Natural killer cell (primary cell): ENCODE measurements at regions of chr11 and their contacts with region 1.

Region 1: DNA sequence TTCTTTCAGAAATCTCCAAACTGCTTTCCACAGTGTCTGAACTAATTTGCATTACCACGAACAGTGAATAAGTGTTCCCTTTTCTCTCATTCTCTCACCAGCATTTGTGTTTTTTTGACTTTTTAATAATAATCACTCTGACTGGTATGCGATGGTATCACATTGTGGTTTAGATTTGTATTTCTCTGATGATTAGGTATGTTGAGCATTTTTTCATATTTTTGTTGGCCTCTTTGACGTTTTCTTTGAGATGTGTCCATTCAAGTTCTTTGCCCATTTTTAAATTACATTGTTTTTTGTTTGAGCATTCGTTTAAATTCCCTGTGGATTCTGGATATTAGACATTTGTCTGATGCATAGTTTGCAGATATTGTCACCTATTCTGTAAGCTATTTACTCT is 1639.6 kb upstream of the TENM4 start:
- DNase-seq: no peak
- ATAC-seq: no peak
- H3K4me3 ChIP-seq: no peak overlapping the region
- H3K4me3 Mint-ChIP-seq: no peak overlapping the region
- H3K27ac ChIP-seq: no peak overlapping the region
- H3K27ac Mint-ChIP-seq: no peak overlapping the region
- H3K4me1 ChIP-seq: no peaks in the 10 kb centered on the region
- H3K4me1 Mint-ChIP-seq: no peaks in the 10 kb centered on the region
- H3K27me3 ChIP-seq: no peaks in the 10 kb centered on the region
- H3K27me3 Mint-ChIP-seq: no peaks in the 10 kb centered on the region
- CTCF ChIP-seq: no peak

Region 2: GRCh38 chr11:80925321-80925720 is 155.2 kb before region 1 on chr11:
- intact Hi-C with region 1: no loop called
- DNase-seq: no peak
- ATAC-seq: no peak
- H3K4me3 ChIP-seq: no peak overlapping the region
- H3K4me3 Mint-ChIP-seq: no peak overlapping the region
- H3K27ac ChIP-seq: no peak overlapping the region
- H3K27ac Mint-ChIP-seq: no peak overlapping the region
- H3K4me1 ChIP-seq: no peaks in the 10 kb centered on the region
- H3K4me1 Mint-ChIP-seq: no peaks in the 10 kb centered on the region
- H3K27me3 ChIP-seq: no peaks in the 10 kb centered on the region
- H3K27me3 Mint-ChIP-seq: no peaks in the 10 kb centered on the region
- CTCF ChIP-seq: no peak

Region 3: DNA sequence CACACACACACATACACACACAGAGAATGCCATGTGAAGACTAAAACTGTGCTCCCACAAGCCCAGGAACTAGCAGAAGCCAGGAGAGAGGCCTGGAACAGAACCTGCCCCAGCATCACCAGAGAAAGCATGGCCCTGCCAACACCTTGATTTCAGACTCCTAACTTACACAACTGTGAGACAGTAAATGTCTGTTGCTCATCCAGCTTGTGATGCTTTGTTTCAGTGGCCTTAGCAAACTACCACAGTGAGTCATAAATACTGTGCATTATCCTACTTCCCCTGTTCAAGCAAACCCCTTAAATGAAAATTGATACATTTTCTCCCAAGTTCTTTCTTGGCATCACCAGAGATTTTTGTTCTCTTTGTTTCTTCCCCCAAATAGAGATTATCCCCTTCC is 100.3 kb before region 1 on chr11:
- intact Hi-C with region 1: no loop called
- DNase-seq: no peak
- ATAC-seq: no peak
- H3K4me3 ChIP-seq: no peak overlapping the region
- H3K4me3 Mint-ChIP-seq: no peak overlapping the region
- H3K27ac ChIP-seq: no peak overlapping the region
- H3K27ac Mint-ChIP-seq: no peak overlapping the region
- H3K4me1 ChIP-seq: no peaks in the 10 kb centered on the region
- H3K4me1 Mint-ChIP-seq: no peaks in the 10 kb centered on the region
- H3K27me3 ChIP-seq: no peaks in the 10 kb centered on the region
- H3K27me3 Mint-ChIP-seq: no peaks in the 10 kb centered on the region
- CTCF ChIP-seq: no peak

Region 4: DNA sequence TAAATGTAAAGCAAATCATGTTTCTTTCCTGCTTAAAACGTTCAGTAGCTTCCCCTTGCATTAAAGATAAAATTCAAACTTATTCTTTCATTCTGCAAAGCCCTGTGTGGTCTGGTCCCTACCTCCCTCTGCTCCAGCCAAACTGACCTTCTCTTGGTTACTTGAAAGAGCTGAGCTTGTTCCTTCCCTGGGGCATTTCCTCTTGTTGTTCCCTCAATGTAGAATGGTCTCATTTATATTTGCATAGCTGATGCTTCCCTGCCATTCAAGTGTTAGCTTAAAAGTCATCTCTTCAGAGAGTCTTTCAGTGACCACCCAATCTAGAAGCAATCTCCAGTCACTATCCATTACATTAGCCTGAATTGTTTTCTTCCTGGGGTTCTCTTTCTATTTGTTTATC is 21.1 kb before region 1 on chr11:
- intact Hi-C with region 1: loop called (anchors 1 kb)
- DNase-seq: no peak
- ATAC-seq: no peak
- H3K4me3 ChIP-seq: no peak overlapping the region
- H3K4me3 Mint-ChIP-seq: no peak overlapping the region
- H3K27ac ChIP-seq: no peak overlapping the region
- H3K27ac Mint-ChIP-seq: no peak overlapping the region
- H3K4me1 ChIP-seq: no peaks in the 10 kb centered on the region
- H3K4me1 Mint-ChIP-seq: no peaks in the 10 kb centered on the region
- H3K27me3 ChIP-seq: no peaks in the 10 kb centered on the region
- H3K27me3 Mint-ChIP-seq: no peaks in the 10 kb centered on the region
- CTCF ChIP-seq: no peak